OCI-LY7 (cell line): ENCODE measurements at regions of chr1 and their contacts with region 1.

Region 1: GRCh38 chr1:20786253-20787028 is 666 bp downstream of the HP1BP3 start:
- DNase-seq: peak; percentile 95
- H3K4me3 ChIP-seq: peak overlapping the region; percentile 91
- H3K27ac ChIP-seq: peak overlapping the region; percentile 82
- H3K4me1 ChIP-seq: peaks cover 26% of the 10 kb centered on the region
- CTCF ChIP-seq: no peak

Region 2: GRCh38 chr1:21189906-21190500 is 403.6 kb after region 1 on chr1:
- CTCF ChIA-PET with region 1: interaction called, 3 read pairs
- POLR2A ChIA-PET with region 1: interaction called, 3 read pairs
- intact Hi-C with region 1: loop called (anchors 10 kb)
- DNase-seq: no peak
- H3K4me3 ChIP-seq: no peak overlapping the region
- H3K27ac ChIP-seq: no peak overlapping the region
- H3K4me1 ChIP-seq: peaks cover 3% of the 10 kb centered on the region
- CTCF ChIP-seq: no peak